AG04449 (cell line): ENCODE measurements at regions of chr19 and their contacts with region 1.

Region 1: GRCh38 chr19:3075895-3076431 is 13.7 kb upstream of the TLE5 start:
- DNase-seq: no peak
- H3K4me3 ChIP-seq: peak overlapping the region; percentile 42
- CTCF ChIP-seq: peak; percentile 93

Region 2: DNA sequence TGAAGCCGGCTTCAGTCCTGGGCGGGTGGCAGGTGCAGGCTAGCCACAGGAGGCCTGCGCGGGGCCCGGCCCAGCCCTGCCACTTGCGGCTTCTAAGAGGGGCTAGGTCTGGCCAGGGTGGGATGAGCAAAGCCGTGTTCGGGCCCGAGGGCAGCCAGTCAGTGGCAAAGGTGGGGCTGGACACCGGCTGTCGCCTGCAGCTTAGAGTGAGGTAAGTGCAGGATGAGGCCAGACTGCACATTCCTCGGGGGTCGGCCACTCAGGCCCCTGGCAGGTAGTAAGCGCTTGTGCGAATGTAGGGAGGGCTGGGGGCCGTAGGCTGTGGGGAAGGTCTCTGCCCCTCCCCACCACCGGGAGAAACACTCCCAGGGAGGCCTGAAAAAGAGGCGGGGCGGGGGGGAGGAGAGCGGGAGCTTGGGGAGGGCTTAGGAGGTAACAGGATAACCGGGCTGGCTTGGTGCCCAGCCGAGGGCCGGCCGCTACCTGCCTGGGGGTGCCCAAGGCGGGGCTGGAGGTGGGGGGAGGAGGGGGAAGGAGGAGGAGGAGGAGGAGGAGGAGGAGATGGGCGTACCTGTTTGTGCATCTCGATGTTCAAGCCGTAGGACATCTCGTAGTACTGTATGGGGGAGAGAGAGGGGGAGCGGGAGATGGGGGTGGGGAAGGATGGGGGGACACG is 20.1 kb before region 1 on chr19:
- CTCF ChIA-PET with region 1: interaction called, 27 read pairs
- POLR2A ChIA-PET with region 1: no interaction called
- DNase-seq: no peak
- H3K4me3 ChIP-seq: no peak overlapping the region
- CTCF ChIP-seq: no peak

Region 3: GRCh38 chr19:3061182-3062167 is 14.5 kb before region 1 on chr19:
- CTCF ChIA-PET with region 1: interaction called, 27 read pairs
- POLR2A ChIA-PET with region 1: no interaction called
- DNase-seq: no peak
- H3K4me3 ChIP-seq: peak overlapping the region; percentile 76
- CTCF ChIP-seq: peak; percentile 41

Region 4: DNA sequence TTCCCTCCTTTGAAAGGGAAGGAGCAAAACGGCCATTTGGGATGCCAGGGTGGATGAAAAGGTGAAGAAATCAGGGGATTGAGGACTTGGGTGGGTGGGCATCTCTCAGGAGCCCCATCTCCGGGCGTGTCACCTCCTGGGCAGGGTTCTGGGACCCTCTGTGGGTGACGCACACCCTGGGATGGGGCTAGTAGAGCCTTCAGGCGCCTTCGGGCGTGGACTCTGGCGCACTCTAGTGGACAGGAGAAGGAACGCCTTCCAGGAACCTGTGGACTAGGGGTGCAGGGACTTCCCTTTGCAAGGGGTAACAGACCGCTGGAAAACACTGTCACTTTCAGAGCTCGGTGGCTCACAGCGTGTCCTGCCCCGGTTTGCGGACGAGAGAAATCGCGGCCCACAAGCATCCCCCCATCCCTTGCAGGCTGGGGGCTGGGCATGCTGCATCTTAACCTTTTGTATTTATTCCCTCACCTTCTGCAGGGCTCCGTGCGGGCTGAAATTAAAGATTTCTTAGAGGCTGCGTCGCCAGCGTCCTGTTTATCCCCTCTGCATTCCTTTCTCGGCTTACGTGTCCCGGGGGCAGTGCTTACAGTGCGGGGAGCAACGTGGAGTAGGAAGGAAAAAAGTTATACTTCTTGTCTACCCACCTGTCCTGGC is 87.4 kb after region 1 on chr19:
- CTCF ChIA-PET with region 1: interaction called, 29 read pairs
- POLR2A ChIA-PET with region 1: no interaction called
- DNase-seq: no peak
- H3K4me3 ChIP-seq: no peak overlapping the region
- CTCF ChIP-seq: peak; percentile 90